Endothelial cell of umbilical vein (primary cell): ENCODE measurements at regions of chr4 and their contacts with region 1.

Region 1: GRCh38 chr4:6873792-6874461 is 35.7 kb upstream of the TBC1D14 start:
- DNase-seq: peak; percentile 69
- H3K4me3 ChIP-seq: no peak overlapping the region
- H3K27ac ChIP-seq: no peak overlapping the region
- H3K4me1 ChIP-seq: no peaks in the 10 kb centered on the region
- H3K27me3 ChIP-seq: no peaks in the 10 kb centered on the region
- CTCF ChIP-seq: peak; percentile 83 to 88
- POLR2A ChIP-seq: no peak

Region 2: DNA sequence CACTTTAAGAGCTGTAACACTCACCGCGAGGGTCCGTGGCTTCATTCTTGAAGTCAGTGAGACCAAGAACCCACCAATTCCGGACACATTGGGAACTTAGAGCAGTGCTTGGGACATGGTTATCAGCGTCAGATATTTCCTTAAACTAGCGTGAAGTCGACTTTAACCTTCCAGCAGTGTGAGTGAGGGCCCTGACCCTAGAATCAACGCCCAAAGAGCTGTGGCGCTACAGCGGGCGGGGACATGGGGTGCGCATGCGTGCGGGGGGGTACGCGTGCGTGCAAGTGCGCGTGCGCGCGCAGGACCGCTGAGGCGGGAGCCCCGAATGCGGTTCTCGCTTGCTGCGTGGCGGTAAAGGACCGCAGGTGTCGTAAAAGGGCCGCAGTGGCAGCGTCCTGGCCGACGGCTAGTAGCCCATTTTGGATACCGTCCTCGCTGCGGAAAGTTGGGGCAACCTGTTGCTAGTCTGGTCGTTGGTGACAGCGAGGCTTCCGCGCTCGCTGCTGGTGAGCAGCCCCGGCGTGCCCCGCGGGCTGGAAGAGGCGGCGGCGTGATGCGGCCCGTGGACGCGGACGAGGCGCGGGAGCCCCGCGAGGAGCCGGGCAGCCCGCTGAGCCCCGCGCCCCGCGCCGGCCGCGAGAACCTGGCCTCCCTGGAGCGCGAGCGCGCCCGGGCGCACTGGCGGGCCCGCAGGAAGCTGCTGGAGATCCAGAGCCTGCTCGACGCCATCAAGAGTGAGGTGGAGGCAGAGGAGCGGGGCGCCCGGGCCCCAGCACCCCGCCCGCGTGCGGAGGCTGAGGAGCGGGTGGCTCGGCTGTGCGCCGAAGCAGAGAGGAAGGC is 200.0 kb before region 1 on chr4:
- CTCF ChIA-PET with region 1: interaction called, 10 read pairs
- POLR2A ChIA-PET with region 1: no interaction called
- dilution Hi-C with region 1: no loop called
- intact Hi-C with region 1: no loop called
- DNase-seq: peak; percentile 97
- H3K4me3 ChIP-seq: peak overlapping the region; percentile 25 to 71 (median 49)
- H3K27ac ChIP-seq: no peak overlapping the region
- H3K4me1 ChIP-seq: peaks cover 10% of the 10 kb centered on the region
- H3K27me3 ChIP-seq: no peaks in the 10 kb centered on the region
- CTCF ChIP-seq: no peak
- POLR2A ChIP-seq: peak; percentile 77

Region 3: DNA sequence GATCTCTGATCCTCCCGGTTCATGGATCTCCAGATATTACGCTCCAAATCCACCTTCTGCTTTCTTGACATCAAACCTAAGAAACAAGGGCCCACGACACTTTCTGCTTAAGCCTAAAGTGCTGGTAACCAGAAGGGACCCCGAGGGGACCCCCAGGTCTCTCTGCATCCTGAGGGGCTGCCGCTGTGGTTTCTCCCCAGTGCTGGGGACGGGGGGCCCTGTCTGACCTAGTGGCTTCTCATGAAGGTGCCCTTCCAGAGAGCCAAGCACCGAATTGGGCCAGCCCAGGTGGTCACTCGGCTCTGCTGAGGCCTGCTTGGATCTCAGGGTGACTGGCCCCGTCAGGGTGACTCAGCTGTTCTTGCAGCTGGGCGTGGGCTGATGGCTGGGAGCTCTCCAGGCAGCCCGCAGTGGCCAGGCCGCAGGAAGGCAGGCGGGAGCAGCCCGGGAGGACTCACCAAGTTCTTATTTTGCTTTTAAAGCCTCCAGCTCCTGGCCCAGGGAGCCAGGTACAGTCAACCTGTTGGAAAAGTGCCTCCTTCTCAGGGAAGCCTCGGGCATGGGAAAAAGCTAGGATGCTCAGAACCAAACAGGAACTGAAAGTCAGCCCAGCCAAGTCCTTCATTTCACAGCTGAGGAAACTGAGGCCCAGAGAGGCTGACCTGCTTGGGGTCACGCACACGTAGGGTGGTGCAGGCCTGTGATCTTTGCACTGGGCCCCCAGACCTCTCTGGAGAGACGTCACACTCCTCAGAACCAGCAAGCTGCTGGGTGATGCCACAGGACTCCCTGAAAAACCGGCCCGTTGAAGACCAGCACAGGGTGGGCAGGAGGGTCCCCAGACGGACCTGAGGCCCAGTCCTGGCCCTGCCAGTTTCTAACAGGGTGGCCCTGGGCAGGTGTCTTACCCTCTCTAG is 141.2 kb before region 1 on chr4:
- CTCF ChIA-PET with region 1: interaction called, 15 read pairs
- POLR2A ChIA-PET with region 1: no interaction called
- dilution Hi-C with region 1: no loop called
- intact Hi-C with region 1: no loop called
- DNase-seq: peak; percentile 15
- H3K4me3 ChIP-seq: no peak overlapping the region
- H3K27ac ChIP-seq: peak overlapping the region; percentile 48
- H3K4me1 ChIP-seq: peaks cover 3% of the 10 kb centered on the region
- H3K27me3 ChIP-seq: no peaks in the 10 kb centered on the region
- CTCF ChIP-seq: no peak
- POLR2A ChIP-seq: no peak

Region 4: DNA sequence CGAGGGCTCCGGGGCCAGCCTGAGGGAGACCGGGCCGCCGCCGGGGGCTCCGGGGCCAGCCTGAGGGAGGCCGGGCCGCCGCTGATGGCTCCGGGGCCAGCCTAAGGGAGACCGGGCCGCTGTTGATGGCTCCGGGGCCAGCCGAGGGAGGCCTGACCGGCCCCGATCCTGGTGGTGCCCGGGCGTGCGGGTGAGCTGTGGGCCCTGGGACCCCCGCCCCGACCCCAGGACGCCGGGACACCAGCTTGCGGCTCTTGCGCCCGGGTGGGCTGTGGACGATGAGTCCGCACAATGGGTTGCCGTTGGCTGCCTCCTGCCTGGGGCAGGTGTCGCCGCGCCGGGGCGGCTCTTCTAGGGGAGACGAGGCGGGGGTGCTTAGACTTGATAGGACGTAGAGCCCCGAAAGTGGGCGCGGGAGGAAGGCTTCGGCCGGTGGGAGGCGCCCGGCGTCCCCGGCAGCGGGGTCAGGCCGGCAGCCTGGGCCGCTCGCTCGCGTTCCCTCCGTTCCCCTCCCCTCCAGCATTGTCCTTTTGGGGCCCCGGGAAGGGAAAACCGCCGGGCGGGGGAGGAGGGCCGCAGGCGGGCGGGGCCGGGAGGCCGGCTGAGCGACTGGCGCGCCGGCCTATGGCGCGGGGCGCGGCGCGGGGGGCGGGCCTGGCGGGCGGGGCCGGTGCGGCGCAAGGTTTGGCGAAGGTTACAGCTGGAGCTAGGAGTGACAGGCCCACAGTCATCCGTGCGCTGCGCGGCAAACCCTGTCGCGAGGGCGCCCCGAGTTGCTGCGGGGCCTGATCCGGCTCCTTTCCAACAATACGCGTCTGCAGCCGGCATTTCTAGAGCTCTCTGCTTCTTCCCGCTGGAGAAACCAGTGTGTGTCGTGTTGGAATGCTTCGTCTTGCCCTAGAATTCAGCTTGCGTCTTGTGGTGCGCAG is 90.6 kb before region 1 on chr4:
- CTCF ChIA-PET with region 1: interaction called, 17 read pairs
- POLR2A ChIA-PET with region 1: no interaction called
- dilution Hi-C with region 1: no loop called
- intact Hi-C with region 1: loop called (anchors 1 kb)
- DNase-seq: peak; percentile 84
- H3K4me3 ChIP-seq: peak overlapping the region; percentile 75 to 99 (median 83)
- H3K27ac ChIP-seq: peak overlapping the region; percentile 89
- H3K4me1 ChIP-seq: peaks cover 10% of the 10 kb centered on the region
- H3K27me3 ChIP-seq: no peaks in the 10 kb centered on the region
- CTCF ChIP-seq: no peak
- POLR2A ChIP-seq: no peak

Region 5: DNA sequence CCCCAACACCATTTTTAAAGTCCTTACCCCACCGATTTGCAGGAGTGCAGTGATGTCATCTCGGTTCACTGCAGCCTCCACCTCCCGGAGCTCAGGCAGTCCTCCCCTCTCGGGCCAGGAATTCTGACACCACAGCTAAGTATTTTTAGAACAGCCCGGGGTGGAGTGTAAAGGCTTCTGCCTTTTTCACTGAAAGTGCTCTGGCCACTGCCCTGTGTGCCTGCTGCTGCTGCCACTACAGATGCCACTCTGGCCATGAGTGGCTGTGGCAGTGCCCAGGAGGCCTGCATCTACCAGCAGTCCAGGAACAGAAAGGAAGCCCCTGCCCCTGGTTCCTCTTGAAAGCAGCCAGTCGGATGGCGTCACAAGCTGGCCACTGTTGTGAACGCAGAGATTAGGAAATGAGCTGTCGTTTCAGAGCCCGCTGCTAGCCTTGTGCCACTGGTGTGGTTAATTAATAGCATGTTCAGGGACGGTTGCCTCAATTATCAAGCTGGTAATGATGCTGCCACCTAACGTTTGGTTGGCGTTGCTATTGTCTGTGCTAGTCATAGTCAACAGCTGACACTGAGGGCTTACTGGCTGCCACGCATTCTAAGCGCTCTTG is 12.1 kb after region 1 on chr4:
- CTCF ChIA-PET with region 1: interaction called, 56 read pairs
- POLR2A ChIA-PET with region 1: no interaction called
- dilution Hi-C with region 1: no loop called
- intact Hi-C with region 1: no loop called
- DNase-seq: peak; percentile 15
- H3K4me3 ChIP-seq: no peak overlapping the region
- H3K27ac ChIP-seq: no peak overlapping the region
- H3K4me1 ChIP-seq: no peaks in the 10 kb centered on the region
- H3K27me3 ChIP-seq: no peaks in the 10 kb centered on the region
- CTCF ChIP-seq: no peak
- POLR2A ChIP-seq: no peak